Panc1 (cell line): ENCODE measurements at regions of chr10 and their contacts with region 1.

Region 1: DNA sequence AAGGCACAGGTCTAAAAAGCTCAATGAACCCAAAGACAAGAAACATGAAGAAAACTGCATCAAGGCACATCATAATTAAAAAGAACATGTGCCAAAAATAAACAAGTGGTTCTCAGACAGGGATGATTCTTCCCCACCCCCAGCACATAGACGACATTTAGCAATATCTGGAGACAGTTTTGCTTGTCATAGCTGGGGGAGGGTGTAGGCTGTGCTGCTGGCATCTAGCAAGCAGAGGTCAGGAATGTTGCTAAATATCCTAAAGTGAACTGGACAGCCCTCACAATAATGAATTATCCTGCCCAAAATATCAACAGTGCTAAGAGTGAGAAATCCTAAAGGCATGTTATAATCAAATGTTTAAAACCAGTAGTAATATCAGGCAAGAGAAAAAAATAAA is 122.6 kb downstream of the MICU1 start:
- DNase-seq: no peak
- ATAC-seq: no peak
- H3K4me3 ChIP-seq: no peak overlapping the region
- H3K27ac ChIP-seq: no peak overlapping the region
- H3K4me1 ChIP-seq: no peaks in the 10 kb centered on the region
- H3K27me3 ChIP-seq: no peaks in the 10 kb centered on the region
- CTCF ChIP-seq: no peak

Region 2: DNA sequence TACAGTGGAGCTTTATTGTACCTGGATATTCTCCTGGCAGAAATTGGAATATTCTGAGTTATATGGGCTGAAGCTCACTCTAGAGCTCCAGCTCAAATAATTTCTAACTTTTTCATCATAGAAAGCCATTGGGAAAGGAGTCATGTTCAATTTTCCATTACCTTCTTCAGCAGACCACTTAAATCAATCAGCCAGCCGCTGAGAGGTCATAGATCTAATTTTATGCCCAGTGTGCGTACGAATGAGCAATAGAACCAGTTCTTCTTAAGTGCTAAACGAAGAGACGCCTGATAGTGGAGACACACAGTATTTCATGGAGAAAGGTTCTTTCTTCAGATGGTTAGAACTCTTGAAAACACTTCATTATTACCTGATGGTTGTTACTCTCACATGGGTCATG is 113.5 kb before region 1 on chr10:
- CTCF ChIA-PET with region 1: no interaction called
- POLR2A ChIA-PET with region 1: no interaction called
- in situ Hi-C with region 1: no loop called
- intact Hi-C with region 1: no loop called
- DNase-seq: no peak
- ATAC-seq: no peak
- H3K4me3 ChIP-seq: no peak overlapping the region
- H3K27ac ChIP-seq: no peak overlapping the region
- H3K4me1 ChIP-seq: no peaks in the 10 kb centered on the region
- H3K27me3 ChIP-seq: no peaks in the 10 kb centered on the region
- CTCF ChIP-seq: no peak

Region 3: DNA sequence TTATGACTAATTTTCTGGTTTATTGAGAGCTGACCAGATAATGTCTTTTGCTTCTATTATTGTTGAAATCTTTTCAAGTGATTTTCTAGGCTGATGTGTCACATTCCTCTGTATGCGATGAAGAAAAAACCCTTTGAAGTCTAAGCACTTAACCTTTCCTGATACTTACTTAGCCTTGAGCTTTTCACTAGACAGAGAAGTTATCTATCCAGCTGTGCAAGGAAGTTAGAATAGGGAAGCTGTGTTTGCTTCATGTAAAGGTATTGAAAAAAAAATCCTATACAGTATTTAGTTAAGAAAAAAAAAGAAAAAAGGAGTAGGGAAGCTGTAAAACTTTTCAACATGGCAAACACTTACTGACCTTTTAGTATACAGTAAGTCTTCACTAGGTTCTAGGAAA is 30.9 kb before region 1 on chr10:
- CTCF ChIA-PET with region 1: interaction called, 10 read pairs
- POLR2A ChIA-PET with region 1: no interaction called
- in situ Hi-C with region 1: no loop called
- intact Hi-C with region 1: no loop called
- DNase-seq: no peak
- ATAC-seq: no peak
- H3K4me3 ChIP-seq: no peak overlapping the region
- H3K27ac ChIP-seq: no peak overlapping the region
- H3K4me1 ChIP-seq: no peaks in the 10 kb centered on the region
- H3K27me3 ChIP-seq: no peaks in the 10 kb centered on the region
- CTCF ChIP-seq: no peak